SK-N-SH (cell line): ENCODE measurements at regions of chr5 and their contacts with region 1.

Region 1: GRCh38 chr5:179166886-179167841 is 107.0 kb downstream of the ZNF354C start:
- DNase-seq: peak; percentile 97
- H3K4me3 ChIP-seq: peak overlapping the region in 1 of 2 experiments; percentile 39; a peak in 1 of 4 replicates
- H3K27ac ChIP-seq: no peak overlapping the region; a peak in 1 of 4 replicates
- H3K4me1 ChIP-seq: peaks cover 0 to 20% of the 10 kb centered on the region in 2 experiments; a peak in 1 of 4 replicates
- H3K27me3 ChIP-seq: no peaks in the 10 kb centered on the region
- CTCF ChIP-seq: peak; percentile 34
- EP300 ChIP-seq: no peak
- RAD21 ChIP-seq: peak; percentile 78

Region 2: GRCh38 chr5:178626484-178627258 is 540.5 kb before region 1 on chr5 and contains the start of gene CLK4:
- CTCF ChIA-PET with region 1: no interaction called
- POLR2A ChIA-PET with region 1: no interaction called
- DNase-seq: peak; percentile 97
- H3K4me3 ChIP-seq: peak within 1 kb of the TSS; percentile 83 to 97
- H3K27ac ChIP-seq: peak within 1 kb of the TSS; percentile 77 to 92
- H3K4me1 ChIP-seq: peaks cover 5 to 6% of the 10 kb centered on the region in 2 experiments; a peak in 2 of 4 replicates
- H3K27me3 ChIP-seq: no peaks in the 10 kb centered on the region
- CTCF ChIP-seq: no peak
- EP300 ChIP-seq: no peak
- RAD21 ChIP-seq: no peak
- polyA plus RNA-seq, gene CLK4: 7.5 and 10.1 TPM in 2 replicates

Region 3: DNA sequence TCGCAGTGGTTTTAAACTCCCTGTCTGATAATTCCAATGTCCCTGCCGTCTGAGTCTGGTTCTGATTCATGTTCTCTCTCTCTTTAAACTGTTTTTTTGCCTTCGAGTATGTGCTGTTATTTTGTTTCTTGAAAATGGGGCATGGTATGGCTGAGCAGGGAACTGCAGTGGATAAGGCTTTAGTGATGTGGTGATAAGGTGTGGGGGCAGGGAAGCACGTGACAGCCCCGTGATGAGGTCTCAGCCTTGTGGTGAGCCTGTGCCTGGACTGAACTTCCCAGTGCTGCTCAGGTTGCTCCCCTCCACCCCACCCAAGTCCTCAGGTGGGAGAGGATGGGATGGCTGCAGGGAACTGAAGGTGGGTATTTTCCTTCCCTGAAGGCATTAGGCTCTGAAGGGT is 312.9 kb before region 1 on chr5:
- CTCF ChIA-PET with region 1: no interaction called
- POLR2A ChIA-PET with region 1: no interaction called
- DNase-seq: no peak
- H3K4me3 ChIP-seq: no peak overlapping the region
- H3K27ac ChIP-seq: no peak overlapping the region
- H3K4me1 ChIP-seq: no peaks in the 10 kb centered on the region; a peak in 1 of 4 replicates
- H3K27me3 ChIP-seq: no peaks in the 10 kb centered on the region
- CTCF ChIP-seq: no peak
- EP300 ChIP-seq: no peak
- RAD21 ChIP-seq: no peak

Region 4: GRCh38 chr5:179132586-179133315 is 34.4 kb before region 1 on chr5:
- CTCF ChIA-PET with region 1: no interaction called
- POLR2A ChIA-PET with region 1: no interaction called
- DNase-seq: no peak
- H3K4me3 ChIP-seq: no peak overlapping the region
- H3K27ac ChIP-seq: no peak overlapping the region
- H3K4me1 ChIP-seq: no peaks in the 10 kb centered on the region
- H3K27me3 ChIP-seq: no peaks in the 10 kb centered on the region
- CTCF ChIP-seq: no peak
- EP300 ChIP-seq: no peak
- RAD21 ChIP-seq: no peak

Region 5: DNA sequence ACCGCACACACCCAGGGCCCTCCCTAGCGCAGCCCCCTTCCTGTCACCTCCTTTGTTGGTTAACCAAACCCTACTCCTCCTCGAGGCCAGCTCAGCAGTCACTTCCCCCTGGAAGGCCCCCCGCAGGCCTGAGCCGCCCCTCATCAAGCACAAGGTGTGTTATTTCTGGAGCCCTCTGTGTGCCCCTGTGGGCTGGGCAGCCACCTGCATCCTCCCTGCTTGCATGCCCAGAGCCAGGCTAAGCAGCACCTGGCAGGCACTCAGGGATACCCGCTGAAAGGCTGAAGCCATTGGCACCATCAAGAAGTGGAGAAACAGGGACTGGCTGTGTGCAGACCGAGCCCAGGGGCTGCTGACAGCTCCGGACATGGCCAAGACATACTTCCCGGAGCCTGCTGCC is 14.8 kb after region 1 on chr5:
- CTCF ChIA-PET with region 1: interaction called, 22 read pairs
- POLR2A ChIA-PET with region 1: no interaction called
- DNase-seq: no peak
- H3K4me3 ChIP-seq: no peak overlapping the region
- H3K27ac ChIP-seq: no peak overlapping the region; a peak in 1 of 4 replicates
- H3K4me1 ChIP-seq: peaks cover 0 to 18% of the 10 kb centered on the region in 2 experiments; a peak in 1 of 4 replicates
- H3K27me3 ChIP-seq: no peaks in the 10 kb centered on the region
- CTCF ChIP-seq: no peak
- EP300 ChIP-seq: no peak
- RAD21 ChIP-seq: no peak

Region 6: GRCh38 chr5:179201986-179202385 is 34.8 kb after region 1 on chr5:
- CTCF ChIA-PET with region 1: interaction called, 12 read pairs
- POLR2A ChIA-PET with region 1: no interaction called
- DNase-seq: no peak
- H3K4me3 ChIP-seq: no peak overlapping the region
- H3K27ac ChIP-seq: no peak overlapping the region
- H3K4me1 ChIP-seq: peaks cover 0 to 17% of the 10 kb centered on the region in 2 experiments; a peak in 1 of 4 replicates
- H3K27me3 ChIP-seq: no peaks in the 10 kb centered on the region
- CTCF ChIP-seq: no peak
- EP300 ChIP-seq: no peak
- RAD21 ChIP-seq: no peak

Region 7: DNA sequence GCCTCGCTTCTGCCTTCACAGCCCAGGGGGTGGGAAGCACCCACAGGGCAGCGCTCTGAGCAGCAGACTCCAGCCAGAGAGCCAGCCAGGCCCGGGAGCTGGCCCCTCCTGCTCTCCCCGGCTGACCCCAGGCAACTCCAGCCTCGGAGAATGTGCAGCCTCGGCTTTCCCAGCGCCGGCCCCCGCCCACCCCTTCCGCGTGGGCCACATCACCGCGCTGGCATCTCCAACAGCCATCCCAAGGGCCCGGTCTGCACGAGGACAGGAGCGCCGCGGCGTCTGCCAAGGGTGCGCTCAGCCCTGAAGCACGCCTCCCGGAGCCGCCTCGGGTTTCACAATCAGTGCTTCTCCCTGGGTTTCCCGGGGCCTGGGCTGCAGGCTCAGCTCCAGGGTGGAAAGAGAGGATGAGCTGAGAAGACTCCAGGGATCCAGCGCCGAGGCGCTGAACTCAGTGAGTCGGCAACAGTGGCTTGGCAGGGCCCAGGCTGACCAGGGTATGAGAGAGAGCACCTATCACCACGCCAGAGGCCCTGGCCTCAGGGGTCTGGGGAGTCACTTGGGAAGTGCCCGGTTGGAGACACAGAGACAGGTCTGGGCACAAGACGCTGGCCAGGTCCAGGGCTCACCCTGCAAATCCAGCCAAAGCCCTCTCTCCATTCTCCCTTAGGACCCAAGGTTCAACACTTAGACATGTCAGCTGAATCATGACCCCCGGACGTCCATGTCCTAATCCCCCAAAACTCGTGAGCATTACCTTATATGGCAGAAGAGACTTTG is 98.5 kb after region 1 on chr5:
- CTCF ChIA-PET with region 1: interaction called, 104 read pairs
- POLR2A ChIA-PET with region 1: no interaction called
- DNase-seq: peak; percentile 70
- H3K4me3 ChIP-seq: no peak overlapping the region
- H3K27ac ChIP-seq: peak overlapping the region in 1 of 2 experiments; percentile 96; a peak in 2 of 4 replicates
- H3K4me1 ChIP-seq: peaks cover 0 to 95% of the 10 kb centered on the region in 2 experiments; a peak in 2 of 4 replicates
- H3K27me3 ChIP-seq: no peaks in the 10 kb centered on the region
- CTCF ChIP-seq: no peak
- EP300 ChIP-seq: no peak
- RAD21 ChIP-seq: no peak

Region 8: DNA sequence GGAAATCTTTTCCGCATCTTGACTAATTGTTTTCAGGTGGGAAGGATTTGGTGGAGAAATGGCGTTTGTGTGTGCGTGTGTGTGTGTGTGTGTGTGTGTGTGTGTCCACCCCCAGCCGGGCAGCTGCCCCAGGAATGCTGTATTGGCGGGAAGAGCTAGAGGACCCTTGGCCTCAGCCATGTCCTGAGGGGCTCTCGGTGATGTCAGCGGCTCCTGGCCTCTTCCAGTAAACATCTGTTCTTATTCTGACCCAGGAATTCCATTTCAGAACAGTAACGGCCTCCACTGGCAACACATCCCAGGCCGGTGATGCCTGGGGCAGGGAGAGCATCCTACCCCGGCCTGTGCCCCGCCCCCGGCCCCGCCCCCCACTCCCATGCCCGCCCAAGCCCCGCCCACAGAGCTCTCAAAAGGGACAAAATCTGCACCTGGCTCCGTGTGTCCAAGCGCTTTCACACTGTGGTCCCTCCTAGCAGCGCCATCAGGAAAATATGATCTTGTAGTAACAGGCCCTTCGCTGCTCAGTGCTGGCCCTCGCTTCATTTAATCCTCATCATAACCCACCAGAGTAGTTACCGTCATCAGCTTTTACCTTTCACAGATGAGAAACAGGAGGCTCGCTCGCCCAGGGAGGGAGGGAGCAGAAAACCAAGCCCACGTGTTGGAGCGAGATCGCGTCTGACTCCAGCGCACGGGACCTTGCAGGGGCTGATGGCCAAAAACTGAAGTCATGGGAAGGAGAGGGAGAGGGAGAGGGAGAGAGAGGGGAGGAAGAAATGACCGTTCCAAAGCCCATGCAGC is 159.2 kb after region 1 on chr5:
- CTCF ChIA-PET with region 1: interaction called, 46 read pairs
- POLR2A ChIA-PET with region 1: no interaction called
- DNase-seq: peak; percentile 92
- H3K4me3 ChIP-seq: no peak overlapping the region
- H3K27ac ChIP-seq: peak overlapping the region in 1 of 2 experiments; percentile 96; a peak in 2 of 4 replicates
- H3K4me1 ChIP-seq: peaks cover 0 to 75% of the 10 kb centered on the region in 2 experiments; a peak in 2 of 4 replicates
- H3K27me3 ChIP-seq: no peaks in the 10 kb centered on the region
- CTCF ChIP-seq: no peak
- EP300 ChIP-seq: no peak
- RAD21 ChIP-seq: no peak

Region 9: DNA sequence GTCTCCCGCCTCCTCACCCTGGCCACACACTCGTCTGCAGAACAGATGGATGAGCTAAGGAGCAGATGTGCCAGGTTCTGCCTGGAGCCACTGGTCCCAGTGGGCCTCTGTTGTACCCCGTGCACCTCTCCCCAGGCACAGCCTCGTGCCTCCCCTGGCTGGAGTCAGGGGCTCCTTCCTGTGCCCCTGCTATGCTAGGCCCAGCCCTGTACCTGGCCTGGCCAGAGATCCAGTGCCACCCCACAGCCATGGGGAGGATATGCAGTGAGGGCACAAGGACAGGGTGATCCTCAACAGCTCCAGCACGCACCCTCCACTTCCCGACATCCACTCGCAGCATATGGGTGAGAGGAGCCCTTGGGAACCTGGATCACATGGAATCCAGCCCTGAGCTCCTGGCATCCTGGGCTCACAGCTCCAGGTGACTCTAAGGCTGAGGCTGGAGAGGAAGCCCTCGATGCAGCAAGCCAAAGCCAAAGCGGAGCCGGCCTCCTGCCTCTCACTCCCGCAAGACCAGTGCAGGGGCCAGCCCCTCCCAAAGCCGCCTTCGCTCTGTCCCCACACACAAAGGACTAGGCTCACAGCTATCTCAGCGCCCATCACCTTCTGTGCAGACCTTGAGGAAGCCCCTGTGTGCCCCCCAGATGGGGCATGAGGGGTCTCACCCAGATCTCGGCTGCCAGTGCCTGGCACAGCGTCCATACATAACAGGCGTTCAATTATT is 201.8 kb after region 1 on chr5:
- CTCF ChIA-PET with region 1: no interaction called
- POLR2A ChIA-PET with region 1: no interaction called
- DNase-seq: no peak
- H3K4me3 ChIP-seq: no peak overlapping the region
- H3K27ac ChIP-seq: no peak overlapping the region; a peak in 1 of 4 replicates
- H3K4me1 ChIP-seq: peaks cover 0 to 34% of the 10 kb centered on the region in 2 experiments; a peak in 1 of 4 replicates
- H3K27me3 ChIP-seq: no peaks in the 10 kb centered on the region
- CTCF ChIP-seq: no peak
- EP300 ChIP-seq: no peak
- RAD21 ChIP-seq: no peak

Region 10: GRCh38 chr5:179404321-179405053 is 237.3 kb after region 1 on chr5:
- CTCF ChIA-PET with region 1: interaction called, 12 read pairs
- POLR2A ChIA-PET with region 1: no interaction called
- DNase-seq: peak; percentile 62
- H3K4me3 ChIP-seq: no peak overlapping the region
- H3K27ac ChIP-seq: peak overlapping the region in 1 of 2 experiments; percentile 91; a peak in 1 of 4 replicates
- H3K4me1 ChIP-seq: peaks cover 0 to 58% of the 10 kb centered on the region in 2 experiments; a peak in 1 of 4 replicates
- H3K27me3 ChIP-seq: no peaks in the 10 kb centered on the region
- CTCF ChIP-seq: no peak
- EP300 ChIP-seq: no peak
- RAD21 ChIP-seq: peak; percentile 67